ENCODE measurements at regions of chr3 and their contacts with region 1.

Region 1: DNA sequence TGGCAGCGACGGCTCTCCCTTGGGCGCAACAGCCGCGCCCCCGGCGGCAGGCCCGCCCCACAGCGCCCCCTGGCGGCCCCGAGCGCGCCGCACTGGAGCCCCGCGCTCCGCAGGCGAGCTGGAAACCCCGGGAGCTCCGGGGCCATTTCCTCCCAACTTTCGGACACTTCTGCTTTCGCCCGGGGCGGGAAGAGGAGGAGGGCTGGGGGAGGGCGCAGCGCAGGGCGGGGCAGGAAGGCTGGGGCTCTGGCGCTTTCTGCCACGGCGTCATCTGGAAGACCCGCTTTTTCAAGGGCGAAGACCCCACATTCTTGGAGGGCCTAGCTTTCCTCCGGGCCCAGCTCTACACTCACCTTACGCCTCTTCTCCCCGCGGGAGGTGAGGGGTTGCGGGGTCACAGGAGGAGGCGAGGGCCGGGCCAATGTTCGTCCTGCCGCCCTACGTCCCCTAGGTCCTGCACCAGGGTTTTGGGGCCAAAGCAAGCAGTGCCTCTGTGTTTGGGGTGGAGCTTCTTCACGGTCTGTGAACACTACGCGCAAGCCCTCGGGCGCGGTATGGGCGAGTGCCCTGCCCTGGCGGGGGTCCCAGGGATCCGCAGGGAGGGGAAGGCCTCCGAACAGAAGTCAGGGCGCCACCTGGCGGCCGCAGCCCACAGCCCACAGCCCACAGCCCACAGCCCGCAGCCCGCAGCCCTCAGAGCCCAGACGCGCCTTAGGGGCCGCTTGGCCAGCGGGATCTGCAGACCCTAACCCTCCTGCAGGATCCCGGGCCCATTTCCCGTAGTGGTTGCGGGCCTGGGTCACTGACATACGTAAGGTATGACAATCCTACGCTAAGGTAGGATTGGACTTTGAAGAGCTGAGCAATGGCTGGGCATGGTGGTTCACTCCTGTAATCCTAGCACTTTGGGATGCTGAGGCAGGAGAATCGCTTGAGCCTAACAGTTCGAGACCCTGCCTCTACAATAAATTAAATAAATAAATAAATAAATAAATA is 31.1 kb downstream of the FOXL2 start:
- DNase-seq: peak; percentile 97 to 99 (median 98)
- ATAC-seq: peak; percentile 97 to 98
- H3K4me3 ChIP-seq: peak overlapping the region; percentile 69
- H3K27ac ChIP-seq: peak overlapping the region; percentile 99
- H3K4me1 ChIP-seq: no peaks in the 10 kb centered on the region
- H3K27me3 ChIP-seq: no peaks in the 10 kb centered on the region

Region 2: GRCh38 chr3:138594150-138594934 is 321.5 kb before region 1 on chr3 and contains the start of gene CEP70:
- intact Hi-C with region 1: loop called (anchors 1 to 5 kb)
- DNase-seq: peak; percentile 95 to 98 (median 97)
- ATAC-seq: peak; percentile 99
- H3K4me3 ChIP-seq: peak within 1 kb of the TSS; percentile 82
- H3K27ac ChIP-seq: peak within 1 kb of the TSS; percentile 88
- H3K4me1 ChIP-seq: no peaks in the 10 kb centered on the region
- H3K27me3 ChIP-seq: no peaks in the 10 kb centered on the region
- total RNA-seq, gene CEP70: 33.9 to 46.9 (median 39.2) TPM

Region 3: DNA sequence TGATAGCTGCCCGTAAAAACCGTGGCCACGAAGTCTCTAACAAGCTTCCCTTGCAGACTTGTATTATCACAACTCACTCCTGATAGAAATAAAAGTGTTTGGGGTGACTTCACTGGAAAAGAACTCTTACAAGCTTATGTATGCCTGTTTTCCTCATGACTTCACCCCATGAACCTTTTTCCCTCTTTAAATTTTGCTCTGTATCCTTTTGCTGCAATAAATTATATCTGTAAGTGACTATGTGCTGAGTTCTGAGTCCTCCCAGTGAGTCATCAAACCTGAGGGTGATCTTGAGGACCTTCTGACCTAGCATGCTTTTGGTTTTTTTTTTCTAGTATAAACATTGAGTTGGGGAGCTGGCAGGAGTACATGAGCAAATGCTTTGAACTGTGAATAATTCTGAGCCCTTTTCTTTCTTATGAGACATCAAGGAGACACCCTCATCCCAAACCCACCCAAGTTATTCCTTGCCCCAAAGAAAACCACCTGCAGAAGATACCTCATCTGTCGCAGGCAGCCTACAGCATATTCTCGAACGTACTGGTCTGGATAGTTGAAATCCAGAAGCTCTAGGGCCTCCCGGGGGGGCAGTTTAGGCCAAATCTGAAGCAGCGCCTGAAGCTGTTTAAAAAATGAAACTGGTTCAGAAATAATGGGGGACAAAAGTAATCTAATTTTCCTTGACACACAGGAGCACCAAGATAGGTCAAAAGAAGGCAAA is 221.4 kb before region 1 on chr3:
- intact Hi-C with region 1: loop called in 3 of 4 experiments (anchors 2 to 5 kb)
- DNase-seq: no peak
- ATAC-seq: no peak
- H3K4me3 ChIP-seq: no peak overlapping the region
- H3K27ac ChIP-seq: no peak overlapping the region
- H3K4me1 ChIP-seq: no peaks in the 10 kb centered on the region
- H3K27me3 ChIP-seq: no peaks in the 10 kb centered on the region

Region 4: GRCh38 chr3:138834359-138835212 is 81.2 kb before region 1 on chr3 and contains the start of gene PIK3CB:
- intact Hi-C with region 1: loop called in 2 of 4 experiments (anchors 2 to 10 kb)
- DNase-seq: peak; percentile 95 to 98 (median 97)
- ATAC-seq: peak; percentile 99 to 100
- H3K4me3 ChIP-seq: peak within 1 kb of the TSS; percentile 77
- H3K27ac ChIP-seq: peak within 1 kb of the TSS; percentile 97
- H3K4me1 ChIP-seq: no peaks in the 10 kb centered on the region
- H3K27me3 ChIP-seq: no peaks in the 10 kb centered on the region
- total RNA-seq, gene PIK3CB: 31.4 to 33.2 (median 32.5) TPM